ENCODE measurements at regions of chr17 and their contacts with region 1.

Region 1: DNA sequence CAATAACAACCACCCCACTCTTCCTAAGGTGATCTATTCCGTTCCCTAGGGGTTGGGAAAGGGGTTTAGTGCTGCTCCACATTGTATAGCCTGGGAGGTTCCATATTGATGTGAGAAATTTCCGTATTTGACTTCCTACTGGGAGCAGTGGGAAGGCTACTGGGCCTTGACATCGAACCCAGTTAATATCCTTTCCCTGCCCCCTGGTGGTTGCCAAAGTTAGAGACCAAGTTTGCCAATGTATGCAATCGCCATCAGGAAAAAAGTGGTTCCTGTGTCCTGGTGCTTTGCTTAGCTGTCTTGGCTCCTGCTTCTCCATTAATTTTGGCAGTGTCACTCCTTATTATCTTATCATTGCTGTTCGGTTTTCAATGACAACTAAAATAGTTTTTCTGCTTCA is 914.9 kb downstream of the KCNJ2 start:
- DNase-seq: peak; percentile 20 to 63
- ATAC-seq: peak; percentile 80 to 82
- H3K4me3 ChIP-seq: no peak overlapping the region
- H3K27ac ChIP-seq: no peak overlapping the region
- H3K4me1 ChIP-seq: no peaks in the 10 kb centered on the region
- CTCF ChIP-seq: peak; percentile 38; the same call in 2 of the 3 replicates
- EP300 ChIP-seq: no peak
- POLR2A ChIP-seq: no peak
- RAD21 ChIP-seq: peak; percentile 55 to 66; a peak in 4 of 5 replicates

Region 2: GRCh38 chr17:70995166-70995565 is 89.1 kb before region 1 on chr17:
- CTCF ChIA-PET with region 1: no interaction called
- POLR2A ChIA-PET with region 1: no interaction called
- DNase-seq: no peak
- ATAC-seq: no peak
- H3K4me3 ChIP-seq: no peak overlapping the region
- H3K27ac ChIP-seq: no peak overlapping the region
- H3K4me1 ChIP-seq: no peaks in the 10 kb centered on the region
- CTCF ChIP-seq: no peak
- EP300 ChIP-seq: no peak
- POLR2A ChIP-seq: no peak
- RAD21 ChIP-seq: no peak

Region 3: DNA sequence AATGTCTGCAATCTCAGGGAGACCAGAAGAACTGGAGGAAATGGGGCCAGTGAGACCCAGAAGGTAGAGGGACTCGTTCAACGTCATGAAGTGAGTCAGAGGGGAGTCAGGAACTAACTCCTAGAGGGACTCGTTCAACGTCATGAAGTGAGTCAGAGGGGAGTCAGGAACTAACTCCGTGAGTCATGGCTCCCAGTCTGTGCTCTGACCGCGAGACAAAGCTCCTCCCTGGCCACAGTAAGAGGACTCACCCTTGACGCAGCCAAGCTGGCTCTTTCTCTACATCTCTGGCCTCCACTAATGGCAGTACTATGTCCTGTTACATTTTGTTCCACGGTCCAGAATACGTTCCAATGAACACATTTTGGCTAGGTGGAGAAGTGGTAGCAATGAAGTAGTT is 12.4 kb before region 1 on chr17:
- CTCF ChIA-PET with region 1: interaction called, 11 read pairs
- POLR2A ChIA-PET with region 1: no interaction called
- DNase-seq: peak; percentile 83 to 92
- ATAC-seq: peak; percentile 100
- H3K4me3 ChIP-seq: no peak overlapping the region
- H3K27ac ChIP-seq: peak overlapping the region; percentile 61 to 79
- H3K4me1 ChIP-seq: peaks cover 7% of the 10 kb centered on the region; the same call in 2 of the 3 replicates
- CTCF ChIP-seq: no peak
- EP300 ChIP-seq: no peak
- POLR2A ChIP-seq: no peak
- RAD21 ChIP-seq: no peak

Region 4: GRCh38 chr17:71224824-71225575 is 140.8 kb after region 1 on chr17:
- CTCF ChIA-PET with region 1: no interaction called
- POLR2A ChIA-PET with region 1: no interaction called
- DNase-seq: no peak
- ATAC-seq: no peak
- H3K4me3 ChIP-seq: no peak overlapping the region
- H3K27ac ChIP-seq: no peak overlapping the region
- H3K4me1 ChIP-seq: no peaks in the 10 kb centered on the region
- CTCF ChIP-seq: no peak
- EP300 ChIP-seq: no peak
- POLR2A ChIP-seq: no peak
- RAD21 ChIP-seq: no peak